Dendritic cell treated with granulocyte-macrophage colony-stimulating factor and Interleukin-4, amounts not matched to agents 40 ng/mL and 50 ng/mL, for 4 days (primary cell): ENCODE measurements at regions of chr14 and their contacts with region 1.

Region 1: DNA sequence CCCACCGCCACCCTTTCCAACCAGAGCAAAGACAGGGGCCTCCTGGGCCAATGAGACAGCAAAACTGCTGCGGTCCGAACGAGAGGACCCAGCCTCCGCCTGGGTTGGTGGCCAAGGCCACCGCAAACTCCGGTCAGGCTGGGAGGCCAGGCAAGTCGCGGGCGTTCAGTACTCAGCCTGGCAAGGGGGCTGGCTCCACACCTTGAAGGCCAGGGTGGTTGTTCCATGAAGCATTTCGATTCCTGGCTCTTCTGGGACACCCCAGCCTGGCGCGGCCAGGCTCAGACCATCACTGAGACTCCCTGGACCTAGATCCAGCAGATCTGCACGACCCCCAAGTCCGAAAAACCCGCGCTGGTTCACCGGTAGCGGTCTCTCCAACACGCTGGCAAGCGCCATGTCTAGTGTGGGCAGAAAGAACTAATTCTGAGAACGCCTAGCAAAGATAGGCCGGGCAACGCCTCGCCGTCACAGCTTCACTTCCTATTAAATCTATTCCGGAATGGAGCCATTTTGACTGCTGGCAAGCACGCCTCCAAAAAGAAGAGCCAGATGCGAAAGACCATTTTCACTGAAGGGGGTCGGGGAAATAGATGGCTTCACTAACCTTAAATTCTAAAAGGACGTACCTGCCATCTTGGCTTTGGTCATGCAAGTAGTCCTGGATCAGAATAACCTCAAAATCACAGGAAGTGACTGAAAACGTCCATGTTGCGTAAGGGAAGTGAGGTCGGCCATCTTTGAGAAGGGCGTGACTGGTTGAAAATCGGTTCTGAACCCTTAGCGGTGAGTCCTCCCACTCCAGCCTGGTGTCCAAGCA is at the start of gene PSMB5:
- H3K4me3 Mint-ChIP-seq: peak within 1 kb of the TSS; percentile 95
- H3K27ac Mint-ChIP-seq: peak within 1 kb of the TSS; percentile 95
- H3K4me1 Mint-ChIP-seq: peaks cover 25% of the 10 kb centered on the region
- H3K27me3 Mint-ChIP-seq: no peaks in the 10 kb centered on the region

Region 2: GRCh38 chr14:23006544-23007419 is 27.9 kb before region 1 on chr14:
- intact Hi-C with region 1: loop called (anchors 1 kb)
- H3K4me3 Mint-ChIP-seq: peak overlapping the region; percentile 96
- H3K27ac Mint-ChIP-seq: peak overlapping the region; percentile 99
- H3K4me1 Mint-ChIP-seq: peaks cover 14% of the 10 kb centered on the region
- H3K27me3 Mint-ChIP-seq: no peaks in the 10 kb centered on the region

Region 3: DNA sequence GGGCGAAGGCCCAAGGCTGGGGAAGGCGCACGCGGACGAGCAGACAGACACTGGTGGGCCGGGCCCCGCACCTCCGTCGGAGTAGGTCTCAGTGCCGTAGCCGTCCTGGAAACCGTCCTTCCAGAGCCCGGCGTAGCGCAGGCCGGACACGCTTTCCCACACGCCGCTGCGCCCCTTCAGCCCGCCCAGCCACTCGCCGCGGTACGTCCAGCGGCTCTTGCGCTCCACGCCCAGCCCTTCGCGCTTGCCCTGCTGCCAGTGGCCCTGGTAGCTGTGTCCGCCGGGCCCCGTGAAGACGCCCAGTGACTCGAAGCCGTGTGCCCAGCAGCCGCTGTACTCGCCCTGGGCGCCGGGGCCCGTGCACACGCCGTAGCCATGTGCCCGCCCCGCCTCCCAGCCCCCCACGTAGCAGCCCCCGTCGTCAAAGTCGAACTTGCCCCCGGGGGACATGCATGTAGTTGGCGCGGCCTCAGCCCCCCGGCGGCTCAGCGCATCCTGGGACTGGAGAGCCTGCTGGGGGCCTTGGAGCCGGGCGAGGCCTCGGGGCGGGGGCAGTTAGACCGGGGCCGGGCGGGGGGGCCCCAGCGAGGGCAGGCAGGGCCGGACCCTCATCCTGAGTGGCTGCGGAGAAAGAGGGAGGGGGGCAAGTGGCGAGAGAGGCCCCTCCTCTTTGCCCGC is 542.5 kb after region 1 on chr14:
- intact Hi-C with region 1: no loop called
- H3K4me3 Mint-ChIP-seq: peak overlapping the region; percentile 74
- H3K27ac Mint-ChIP-seq: peak overlapping the region; percentile 75
- H3K4me1 Mint-ChIP-seq: peaks cover 38% of the 10 kb centered on the region
- H3K27me3 Mint-ChIP-seq: peaks cover 64% of the 10 kb centered on the region